H1 (cell line): ENCODE measurements at regions of chr2 and their contacts with region 1.

Region 1: DNA sequence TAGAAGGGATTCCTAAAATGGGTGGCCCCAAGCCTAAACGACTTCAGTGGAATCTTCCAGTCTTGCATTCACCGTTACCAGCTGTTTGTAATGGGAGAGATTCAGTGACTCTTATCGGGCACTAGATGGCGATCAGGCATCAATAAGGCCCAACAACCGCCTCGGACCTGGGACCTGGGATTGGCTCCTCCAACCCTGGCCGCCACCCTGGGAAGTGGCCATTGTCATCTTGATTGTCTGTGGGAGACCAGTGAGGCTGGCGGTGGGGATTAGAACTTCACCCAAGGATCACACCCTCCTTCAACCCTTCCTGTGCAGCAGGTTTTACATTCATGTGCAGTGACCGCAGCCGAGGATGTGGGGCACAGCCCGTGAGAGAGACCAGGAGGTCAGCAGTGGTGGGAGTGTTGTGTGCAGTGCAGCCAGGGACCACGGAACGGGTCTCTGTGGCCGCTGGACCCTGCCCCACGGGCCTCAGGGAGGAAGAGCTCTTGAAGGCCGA is 85.3 kb downstream of the SPP2 start:
- DNase-seq: peak; percentile 49 to 75
- H3K4me3 ChIP-seq: no peak overlapping the region
- H3K27ac ChIP-seq: no peak overlapping the region
- H3K4me1 ChIP-seq: peaks cover 0 to 3% (median 0%) of the 10 kb centered on the region in 4 experiments; a peak in 2 of 7 replicates
- H3K27me3 ChIP-seq: no peaks in the 10 kb centered on the region
- CTCF ChIP-seq: peak; percentile 60 to 88 (median 87)
- EP300 ChIP-seq: no peak
- POLR2A ChIP-seq: no peak
- RAD21 ChIP-seq: peak; percentile 96 to 98

Region 2: DNA sequence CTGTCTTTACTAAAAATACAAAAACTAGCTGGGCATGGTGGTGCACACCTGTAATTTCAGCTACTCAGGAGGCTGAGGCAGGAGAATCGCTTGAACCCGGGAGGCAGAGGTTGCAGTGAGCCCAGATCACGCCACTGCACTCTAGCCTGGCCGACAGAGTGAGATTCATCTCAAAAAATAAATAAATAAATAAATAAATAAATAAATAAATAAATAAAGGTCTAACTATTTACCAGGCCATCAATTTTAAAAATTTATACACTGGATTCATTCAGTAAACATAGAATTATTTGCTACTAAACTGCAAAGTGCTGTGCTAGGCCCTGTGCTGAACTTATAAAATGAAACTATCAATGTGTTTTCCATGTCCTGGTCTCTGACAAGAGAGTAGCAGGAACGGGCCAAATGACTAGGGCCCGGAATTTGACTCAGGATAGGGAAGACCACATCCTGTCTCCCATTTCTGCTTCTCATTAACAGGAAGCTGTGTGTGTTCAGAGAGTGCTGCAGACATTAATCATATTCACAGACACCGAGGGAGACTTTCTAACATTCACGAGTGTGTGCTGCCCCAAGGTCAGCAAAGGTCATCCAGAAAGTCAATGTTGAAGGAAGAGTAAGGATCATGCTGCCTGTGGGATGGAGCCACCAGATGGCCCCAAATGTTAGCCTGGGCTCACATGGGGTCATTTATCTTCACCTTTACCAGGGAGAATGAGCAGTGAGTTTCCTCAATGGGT is 10.5 kb after region 1 on chr2:
- CTCF ChIA-PET with region 1: interaction called, 13 read pairs
- POLR2A ChIA-PET with region 1: no interaction called
- DNase-seq: no peak
- H3K4me3 ChIP-seq: no peak overlapping the region
- H3K27ac ChIP-seq: no peak overlapping the region
- H3K4me1 ChIP-seq: no peaks in the 10 kb centered on the region
- H3K27me3 ChIP-seq: no peaks in the 10 kb centered on the region
- CTCF ChIP-seq: no peak
- EP300 ChIP-seq: no peak
- POLR2A ChIP-seq: no peak
- RAD21 ChIP-seq: peak; percentile 15 to 31; a peak in 3 of 4 replicates

Region 3: DNA sequence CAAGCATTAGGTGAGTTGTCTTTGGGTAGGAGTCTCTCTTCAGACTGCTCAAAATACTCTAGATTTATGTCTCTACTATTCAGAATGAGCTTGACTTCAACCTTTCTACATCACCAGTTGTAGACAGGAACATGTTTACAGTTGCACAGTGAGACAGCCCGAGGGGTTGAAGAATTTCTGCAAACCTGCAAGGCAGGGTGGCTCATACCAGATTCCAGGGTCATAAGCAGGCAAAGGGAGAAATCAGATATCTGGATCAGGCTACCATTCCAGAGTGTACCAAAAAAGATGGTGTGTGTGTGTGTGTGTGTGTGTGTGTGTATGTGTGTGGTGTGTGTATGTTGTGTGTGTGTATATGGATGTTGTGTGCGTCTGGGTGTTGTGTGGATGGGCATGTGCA is 27.1 kb after region 1 on chr2:
- CTCF ChIA-PET with region 1: no interaction called
- POLR2A ChIA-PET with region 1: no interaction called
- DNase-seq: no peak
- H3K4me3 ChIP-seq: no peak overlapping the region
- H3K27ac ChIP-seq: no peak overlapping the region
- H3K4me1 ChIP-seq: peaks cover 0 to 3% (median 1%) of the 10 kb centered on the region in 4 experiments; a peak in 2 of 7 replicates
- H3K27me3 ChIP-seq: no peaks in the 10 kb centered on the region
- CTCF ChIP-seq: no peak
- EP300 ChIP-seq: no peak
- POLR2A ChIP-seq: no peak
- RAD21 ChIP-seq: no peak

Region 4: DNA sequence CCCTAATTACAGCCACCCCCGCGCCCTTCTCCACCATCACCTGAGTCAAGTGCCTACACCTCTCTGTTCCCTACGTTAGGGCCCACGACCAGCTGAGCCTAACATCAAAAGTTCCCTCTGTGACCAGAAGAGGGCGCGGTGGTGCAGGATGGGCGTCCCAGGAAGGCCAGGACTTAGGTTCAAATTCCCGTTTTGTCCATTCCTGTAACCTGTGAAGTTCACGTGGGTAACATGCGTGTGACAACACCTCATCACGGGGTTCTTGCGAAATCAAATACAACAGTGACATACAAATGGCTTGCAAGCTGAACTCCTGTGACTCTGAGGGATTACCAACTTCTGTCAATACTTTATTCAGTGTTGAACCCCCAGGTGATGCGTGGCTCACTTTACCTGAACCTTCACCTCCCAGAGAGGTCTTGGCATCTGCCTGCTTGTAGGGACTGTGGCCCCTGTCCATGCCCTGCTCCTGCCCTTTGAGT is 153.2 kb after region 1 on chr2:
- CTCF ChIA-PET with region 1: interaction called, 23 read pairs
- POLR2A ChIA-PET with region 1: no interaction called
- DNase-seq: peak; percentile 41 to 95
- H3K4me3 ChIP-seq: no peak overlapping the region
- H3K27ac ChIP-seq: no peak overlapping the region
- H3K4me1 ChIP-seq: peaks cover 0 to 2% (median under 1%) of the 10 kb centered on the region in 4 experiments; a peak in 5 of 7 replicates
- H3K27me3 ChIP-seq: no peaks in the 10 kb centered on the region
- CTCF ChIP-seq: peak; percentile 90 to 97 (median 93)
- EP300 ChIP-seq: no peak; a peak in 1 of 3 replicates
- POLR2A ChIP-seq: no peak
- RAD21 ChIP-seq: peak; percentile 92 to 95

Region 5: DNA sequence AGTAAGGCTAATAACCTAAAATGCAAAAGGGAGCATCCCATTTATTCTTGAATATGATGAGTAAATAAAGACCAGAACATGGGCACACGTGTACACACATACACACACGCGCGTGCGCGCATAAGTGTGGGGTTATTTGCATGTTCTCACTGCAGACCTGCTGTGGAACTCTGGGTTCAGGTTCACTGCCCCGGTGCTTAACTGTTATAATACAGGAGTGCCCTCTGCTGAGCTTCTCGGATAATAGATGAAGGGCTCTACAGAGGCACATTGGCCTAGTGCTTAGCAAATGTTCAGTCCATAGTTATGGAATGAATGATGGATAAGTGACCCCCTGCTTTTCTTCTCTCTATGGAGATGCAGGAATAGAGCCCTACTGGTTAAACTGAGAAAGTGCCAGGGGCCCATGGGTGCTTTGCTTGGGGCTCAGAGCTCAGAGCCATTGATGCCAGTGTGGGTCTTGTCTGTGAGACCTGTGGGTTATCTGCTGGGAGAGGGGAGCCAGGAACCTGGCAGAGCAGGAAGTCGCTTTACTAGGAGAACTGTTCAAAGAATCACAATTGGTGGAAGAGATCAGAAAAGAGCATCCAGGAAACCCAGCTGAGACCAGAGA is 364.7 kb after region 1 on chr2:
- CTCF ChIA-PET with region 1: interaction called, 13 read pairs
- POLR2A ChIA-PET with region 1: no interaction called
- DNase-seq: peak in 1 of 2 experiments; percentile 57
- H3K4me3 ChIP-seq: no peak overlapping the region
- H3K27ac ChIP-seq: no peak overlapping the region
- H3K4me1 ChIP-seq: peaks cover 4 to 16% (median 10%) of the 10 kb centered on the region in 4 experiments
- H3K27me3 ChIP-seq: peaks cover 0 to 11% (median 3%) of the 10 kb centered on the region in 4 experiments; a peak in 4 of 7 replicates
- CTCF ChIP-seq: peak; percentile 11 to 79 (median 64)
- EP300 ChIP-seq: no peak
- POLR2A ChIP-seq: no peak
- RAD21 ChIP-seq: peak; percentile 91 to 97